AG04449 (cell line): ENCODE measurements at regions of chr1 and their contacts with region 1.

Region 1: GRCh38 chr1:110087812-110088738 is 17.6 kb upstream of the ALX3 start:
- DNase-seq: no peak
- H3K4me3 ChIP-seq: no peak overlapping the region
- CTCF ChIP-seq: peak; percentile 63

Region 2: DNA sequence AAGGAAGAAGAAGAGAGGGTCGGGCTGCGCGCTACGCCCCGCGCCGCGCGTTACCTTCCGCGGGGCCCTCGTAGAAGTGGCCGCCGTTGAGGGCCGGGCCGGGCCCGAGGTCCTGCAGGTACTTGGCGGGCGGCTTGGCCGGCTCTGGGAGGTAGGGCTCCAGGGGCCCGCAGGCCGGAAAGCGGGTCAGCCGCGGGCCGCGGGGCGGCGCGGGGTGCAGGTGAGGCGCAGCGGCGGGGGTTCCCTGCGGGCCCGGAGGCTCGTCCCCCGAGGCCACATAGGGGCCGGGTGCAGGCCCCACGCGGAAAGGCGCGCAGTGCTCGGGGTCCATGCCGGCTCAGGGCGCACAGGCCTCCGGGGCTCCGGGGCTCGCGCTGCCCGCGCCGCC is 17.8 kb before region 1 on chr1:
- CTCF ChIA-PET with region 1: interaction called, 935 read pairs
- POLR2A ChIA-PET with region 1: no interaction called
- DNase-seq: no peak
- H3K4me3 ChIP-seq: no peak overlapping the region
- CTCF ChIP-seq: no peak

Region 3: GRCh38 chr1:110076789-110077500 is 11.1 kb before region 1 on chr1:
- CTCF ChIA-PET with region 1: interaction called, 51 read pairs
- POLR2A ChIA-PET with region 1: no interaction called
- DNase-seq: no peak
- H3K4me3 ChIP-seq: no peak overlapping the region
- CTCF ChIP-seq: no peak

Region 4: DNA sequence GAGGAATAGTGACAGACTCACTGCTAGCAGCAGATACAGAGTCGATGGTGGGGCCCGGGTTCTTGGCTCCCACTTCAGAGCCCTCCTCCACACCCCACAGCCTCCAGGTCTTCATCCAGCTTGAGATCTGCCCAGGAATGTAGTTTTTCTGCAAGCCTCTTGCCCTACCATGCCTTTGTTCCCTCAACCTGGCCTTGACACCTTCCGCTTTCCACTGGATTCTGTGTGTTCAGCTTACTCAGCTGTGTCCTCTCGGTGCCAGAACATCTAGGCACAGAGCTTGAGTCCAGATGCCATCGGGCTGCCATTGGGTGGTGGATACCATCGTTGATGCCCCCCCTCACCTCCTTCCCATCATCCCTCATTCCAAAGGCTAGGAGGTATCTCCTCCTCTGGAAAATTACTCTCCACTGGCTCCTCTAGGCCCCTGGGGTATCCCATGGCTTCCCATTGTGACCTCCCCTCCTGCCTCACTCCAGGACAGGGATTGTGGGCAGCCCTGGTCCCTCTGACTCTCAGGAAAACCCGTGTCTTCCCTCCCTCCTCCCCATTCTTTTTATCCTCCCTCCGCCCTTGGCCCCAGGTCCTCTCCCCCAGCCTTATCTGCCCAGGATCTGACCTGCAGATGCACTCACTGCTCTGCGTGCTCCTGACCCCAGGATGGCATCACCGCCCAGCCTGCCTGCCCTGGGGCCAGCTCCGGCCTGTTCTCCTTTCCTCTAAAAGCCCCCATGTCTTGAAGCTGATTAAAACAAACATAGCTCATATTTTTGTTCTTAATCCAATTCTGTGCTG is 10.0 kb after region 1 on chr1:
- CTCF ChIA-PET with region 1: interaction called, 317 read pairs
- POLR2A ChIA-PET with region 1: no interaction called
- DNase-seq: no peak
- H3K4me3 ChIP-seq: no peak overlapping the region
- CTCF ChIP-seq: no peak

Region 5: GRCh38 chr1:110106013-110106941 is 18.2 kb after region 1 on chr1:
- CTCF ChIA-PET with region 1: interaction called, 317 read pairs
- POLR2A ChIA-PET with region 1: no interaction called
- DNase-seq: no peak
- H3K4me3 ChIP-seq: no peak overlapping the region
- CTCF ChIP-seq: peak; percentile 92

Region 6: DNA sequence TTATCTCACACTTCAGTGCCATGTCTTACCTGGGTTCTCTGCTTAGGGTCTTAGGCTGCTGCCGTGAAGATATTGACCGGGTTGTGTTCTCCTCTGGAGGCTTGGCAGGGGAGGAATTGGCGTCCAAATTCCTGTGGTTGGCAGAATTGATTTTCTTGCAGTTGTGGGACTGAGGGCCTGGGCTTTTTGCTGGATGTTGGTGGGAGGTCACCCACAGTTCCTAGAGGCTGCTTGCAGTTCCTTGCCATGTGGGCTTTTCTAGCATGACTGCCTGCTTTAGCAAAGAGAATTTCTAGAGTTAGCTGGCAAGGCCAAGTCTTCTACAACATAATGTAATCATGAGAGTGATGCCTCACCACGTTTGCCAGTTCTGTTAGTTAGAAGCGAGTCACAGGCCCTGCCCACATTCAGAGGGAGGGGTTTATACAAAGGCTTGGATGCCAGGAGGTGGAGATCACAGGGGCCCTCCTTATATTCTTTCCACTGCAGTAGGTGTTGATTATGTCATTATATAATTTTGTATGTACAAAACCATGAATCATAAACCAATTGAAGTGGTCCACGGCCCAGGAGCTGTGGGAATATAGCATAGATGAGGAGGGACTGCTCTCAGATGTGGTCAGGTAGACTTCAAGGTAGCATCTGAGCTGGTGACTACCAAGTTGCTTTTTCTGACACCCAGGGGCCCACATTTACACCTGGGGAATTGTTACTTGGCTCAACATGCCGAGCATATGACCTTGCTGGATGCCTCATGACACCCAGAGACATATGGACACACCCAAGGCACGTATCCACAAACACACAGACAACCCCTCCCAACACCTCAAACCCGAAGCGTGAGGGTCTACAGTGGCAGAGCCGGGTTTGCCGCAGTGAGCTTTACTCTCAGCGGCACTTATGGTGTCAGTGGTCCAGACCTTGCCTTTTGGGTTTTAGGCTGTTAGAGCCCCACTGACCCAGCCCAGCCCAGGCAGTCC is 30.9 kb after region 1 on chr1:
- CTCF ChIA-PET with region 1: interaction called, 95 read pairs
- POLR2A ChIA-PET with region 1: no interaction called
- DNase-seq: no peak
- H3K4me3 ChIP-seq: no peak overlapping the region
- CTCF ChIP-seq: no peak

Region 7: DNA sequence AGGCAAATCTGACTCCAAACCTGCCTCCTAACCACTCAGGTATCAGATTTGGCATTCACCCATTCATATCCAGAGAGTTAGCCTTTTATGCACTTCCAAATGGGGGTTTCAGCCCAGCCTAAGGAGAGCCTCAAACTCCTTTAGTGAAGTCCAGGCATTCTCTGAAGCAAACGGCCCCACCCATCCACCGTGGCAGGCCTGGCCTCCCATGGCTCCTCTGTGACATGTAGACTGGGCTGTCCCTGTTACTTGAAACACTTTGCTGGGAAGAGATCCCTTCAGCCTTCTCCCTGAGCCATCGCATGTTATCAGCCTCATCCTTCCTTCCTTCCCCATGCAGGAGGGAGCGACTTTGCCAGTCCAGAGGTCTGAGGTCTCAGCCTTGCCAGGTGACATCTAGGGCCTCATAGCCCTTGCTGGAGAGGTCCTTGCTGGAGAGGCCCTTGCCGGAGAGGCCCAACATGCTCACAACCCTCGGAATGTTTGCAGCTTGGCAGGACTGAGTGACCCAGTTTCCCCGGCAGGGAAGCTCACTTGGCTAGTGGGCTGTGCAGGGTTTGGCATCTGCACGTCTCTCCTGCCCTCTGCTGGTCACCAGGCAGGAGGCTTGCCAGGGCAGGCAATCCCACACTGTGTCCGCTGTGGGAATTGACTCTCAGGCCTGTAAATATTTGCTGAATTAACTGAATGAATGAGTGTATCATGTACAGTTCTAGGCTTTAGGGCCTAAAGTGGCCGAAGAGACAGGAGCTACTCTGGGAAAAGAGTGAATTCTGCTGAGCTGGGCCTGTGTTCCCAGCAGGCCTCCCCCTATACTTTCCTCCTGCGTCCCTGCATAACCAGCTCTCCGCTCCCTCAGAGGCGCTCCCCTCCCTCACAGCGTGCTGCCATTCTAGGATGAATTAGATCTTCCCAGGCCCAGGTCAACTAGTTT is 224.4 kb after region 1 on chr1:
- CTCF ChIA-PET with region 1: no interaction called
- POLR2A ChIA-PET with region 1: no interaction called
- DNase-seq: no peak
- H3K4me3 ChIP-seq: no peak overlapping the region
- CTCF ChIP-seq: peak; percentile 97

Region 8: DNA sequence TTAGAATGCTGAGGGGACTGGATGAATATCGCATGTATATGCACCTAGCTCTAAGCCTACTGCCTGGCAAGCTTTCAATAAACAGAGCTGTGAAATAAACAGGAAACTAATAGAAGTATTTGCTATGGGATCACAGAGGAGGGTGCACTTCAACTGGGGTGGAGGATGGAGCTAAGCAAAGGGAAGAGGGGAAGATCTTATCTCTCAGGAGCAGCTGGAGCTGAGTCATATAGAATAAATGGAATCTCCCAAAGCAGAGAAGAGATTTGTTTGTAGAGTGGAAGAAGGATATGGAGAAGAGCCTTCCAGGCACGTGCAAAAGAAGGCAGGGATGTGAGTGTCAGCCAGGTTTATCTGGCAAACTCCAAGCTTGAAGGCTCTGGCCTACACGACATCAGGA is 447.9 kb after region 1 on chr1:
- CTCF ChIA-PET with region 1: no interaction called
- POLR2A ChIA-PET with region 1: no interaction called
- DNase-seq: no peak
- H3K4me3 ChIP-seq: no peak overlapping the region
- CTCF ChIP-seq: no peak